Panc1 (cell line): ENCODE measurements at regions of chr15 and their contacts with region 1.

Region 1: DNA sequence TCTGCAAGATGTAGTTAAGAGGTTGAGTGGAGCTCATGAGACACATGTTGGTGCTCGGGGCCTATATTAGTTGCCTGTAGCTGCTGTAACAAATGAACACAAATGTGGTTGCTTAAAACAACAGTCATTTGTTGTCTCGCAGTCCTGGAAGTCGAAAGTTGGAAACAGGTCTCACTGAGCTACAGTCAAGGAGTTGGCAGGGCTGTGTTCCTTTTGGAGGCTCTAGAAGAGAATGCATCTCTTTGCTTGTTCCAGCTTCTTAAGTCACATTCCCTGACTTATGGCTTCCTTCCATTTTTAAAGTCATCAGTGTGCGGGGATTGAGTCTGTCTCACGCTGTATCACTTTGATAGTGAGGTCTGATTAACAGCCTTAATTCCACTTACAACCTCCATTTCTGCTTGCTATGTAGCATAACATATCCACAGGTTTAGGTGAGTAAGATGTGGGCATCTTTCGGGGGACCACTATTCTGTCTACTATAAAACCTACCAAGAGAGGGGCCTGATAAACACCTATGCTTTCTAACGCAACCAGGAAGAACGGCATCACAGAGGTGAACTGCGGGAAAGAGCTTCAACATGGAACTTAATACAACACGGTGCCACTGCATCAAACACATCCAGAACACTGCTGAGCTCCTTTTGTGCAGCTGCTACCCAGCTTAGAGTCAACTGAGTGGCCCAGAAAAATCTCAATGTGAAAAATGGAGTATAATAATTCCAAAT is 119.4 kb downstream of the ATP10A start:
- DNase-seq: no peak
- ATAC-seq: no peak
- H3K4me3 ChIP-seq: no peak overlapping the region
- H3K27ac ChIP-seq: no peak overlapping the region
- H3K4me1 ChIP-seq: no peaks in the 10 kb centered on the region
- H3K27me3 ChIP-seq: no peaks in the 10 kb centered on the region
- CTCF ChIP-seq: no peak

Region 2: DNA sequence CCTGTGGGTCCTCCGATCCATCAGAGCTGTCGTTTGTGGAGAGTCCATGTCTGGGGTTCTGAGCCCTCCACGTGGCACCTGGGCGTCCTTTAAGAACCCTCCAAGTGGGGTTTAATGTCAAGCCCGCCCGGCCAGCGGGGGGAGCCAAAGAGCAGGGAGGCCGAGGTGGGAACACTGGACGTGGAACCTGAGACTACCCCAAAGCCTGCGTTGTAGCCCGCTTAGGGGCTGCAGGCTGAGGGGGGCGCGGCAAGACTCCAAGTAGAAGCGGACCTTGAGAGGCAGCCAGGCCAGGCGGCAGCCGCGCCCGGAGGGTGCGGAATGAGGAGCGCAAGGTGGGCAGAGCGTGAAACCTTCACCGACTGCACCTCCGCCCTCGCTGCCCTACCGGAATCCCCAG is 245.6 kb after region 1 on chr15:
- CTCF ChIA-PET with region 1: interaction called, 7 read pairs
- POLR2A ChIA-PET with region 1: interaction called, 11 read pairs
- in situ Hi-C with region 1: no loop called
- intact Hi-C with region 1: no loop called
- DNase-seq: no peak
- ATAC-seq: no peak
- H3K4me3 ChIP-seq: no peak overlapping the region
- H3K27ac ChIP-seq: no peak overlapping the region
- H3K4me1 ChIP-seq: no peaks in the 10 kb centered on the region
- H3K27me3 ChIP-seq: no peaks in the 10 kb centered on the region
- CTCF ChIP-seq: peak; percentile 29

Region 3: GRCh38 chr15:26023231-26023630 is 279.5 kb after region 1 on chr15:
- CTCF ChIA-PET with region 1: no interaction called
- POLR2A ChIA-PET with region 1: no interaction called
- in situ Hi-C with region 1: no loop called
- intact Hi-C with region 1: no loop called
- DNase-seq: no peak
- ATAC-seq: no peak
- H3K4me3 ChIP-seq: no peak overlapping the region
- H3K27ac ChIP-seq: no peak overlapping the region
- H3K4me1 ChIP-seq: no peaks in the 10 kb centered on the region
- H3K27me3 ChIP-seq: no peaks in the 10 kb centered on the region
- CTCF ChIP-seq: no peak